CD4-positive, alpha-beta memory T cell (primary cell): ENCODE measurements at regions of chr1 and their contacts with region 1.

Region 1: GRCh38 chr1:84753516-84754385 is 63.5 kb upstream of the SSX2IP start:
- DNase-seq: peak; percentile 61 to 70 (median 65)
- H3K4me3 ChIP-seq: no peak overlapping the region
- H3K4me3 Mint-ChIP-seq: peak overlapping the region in 2 of 8 donors; percentile 0 to 17
- H3K27ac ChIP-seq: no peak overlapping the region
- H3K27ac Mint-ChIP-seq: peak overlapping the region in 1 of 7 donors; percentile 77
- H3K4me1 ChIP-seq: no peaks in the 10 kb centered on the region
- H3K4me1 Mint-ChIP-seq: peaks cover 0 to 8% (median 4%) of the 10 kb centered on the region in 4 donors
- H3K27me3 ChIP-seq: no peaks in the 10 kb centered on the region
- H3K27me3 Mint-ChIP-seq: peaks cover 12 to 26% of the 10 kb centered on the region in 2 donors

Region 2: DNA sequence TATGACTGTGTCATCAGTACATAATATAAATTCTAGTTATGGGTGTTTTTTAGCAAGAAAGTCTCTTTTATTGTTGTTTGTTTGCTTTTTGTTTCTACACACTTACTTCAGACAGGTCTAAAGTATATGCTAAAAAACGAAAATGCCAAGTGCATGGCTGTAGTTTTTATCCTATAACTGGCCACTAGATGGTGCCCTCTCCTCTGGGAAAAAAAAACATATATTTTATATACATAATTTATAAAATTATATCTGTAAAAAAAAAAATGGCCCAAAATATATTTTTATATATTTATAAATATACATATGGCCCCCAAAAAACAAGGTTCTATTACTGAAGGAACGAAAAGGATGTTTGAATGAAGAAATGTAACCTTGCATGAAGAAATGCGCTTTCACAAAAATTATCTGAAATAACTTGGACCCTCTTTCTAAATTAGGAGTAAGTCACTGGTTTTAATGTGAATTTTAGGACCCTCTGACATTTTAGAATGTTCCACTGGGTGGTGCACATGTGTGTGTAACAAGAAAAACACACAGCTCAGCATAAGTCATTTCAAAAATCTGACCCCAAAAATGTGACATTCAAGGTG is 848.3 kb before region 1 on chr1:
- CTCF ChIA-PET with region 1: interaction called, 6 read pairs
- POLR2A ChIA-PET with region 1: no interaction called
- intact Hi-C with region 1: loop called (anchors 1 kb)
- DNase-seq: peak in 4 of 5 donors; percentile 8 to 28 (median 16)
- H3K4me3 ChIP-seq: no peak overlapping the region
- H3K4me3 Mint-ChIP-seq: no peak overlapping the region
- H3K27ac ChIP-seq: no peak overlapping the region
- H3K27ac Mint-ChIP-seq: no peak overlapping the region
- H3K4me1 ChIP-seq: no peaks in the 10 kb centered on the region
- H3K4me1 Mint-ChIP-seq: no peaks in the 10 kb centered on the region
- H3K27me3 ChIP-seq: no peaks in the 10 kb centered on the region
- H3K27me3 Mint-ChIP-seq: peaks cover 12 to 14% of the 10 kb centered on the region in 2 donors

Region 3: GRCh38 chr1:84433258-84434080 is 320.3 kb before region 1 on chr1:
- CTCF ChIA-PET with region 1: interaction called, 19 read pairs
- POLR2A ChIA-PET with region 1: no interaction called
- intact Hi-C with region 1: no loop called
- DNase-seq: peak; percentile 67 to 83 (median 81)
- H3K4me3 ChIP-seq: peak overlapping the region in 1 of 2 donors; percentile 20
- H3K4me3 Mint-ChIP-seq: peak overlapping the region; percentile 65 to 82 (median 76)
- H3K27ac ChIP-seq: peak overlapping the region; percentile 54
- H3K27ac Mint-ChIP-seq: peak overlapping the region in 1 of 7 donors; percentile 88
- H3K4me1 ChIP-seq: peaks cover 36% of the 10 kb centered on the region
- H3K4me1 Mint-ChIP-seq: peaks cover 8 to 15% (median 12%) of the 10 kb centered on the region in 4 donors
- H3K27me3 ChIP-seq: no peaks in the 10 kb centered on the region
- H3K27me3 Mint-ChIP-seq: no peaks in the 10 kb centered on the region

Region 4: DNA sequence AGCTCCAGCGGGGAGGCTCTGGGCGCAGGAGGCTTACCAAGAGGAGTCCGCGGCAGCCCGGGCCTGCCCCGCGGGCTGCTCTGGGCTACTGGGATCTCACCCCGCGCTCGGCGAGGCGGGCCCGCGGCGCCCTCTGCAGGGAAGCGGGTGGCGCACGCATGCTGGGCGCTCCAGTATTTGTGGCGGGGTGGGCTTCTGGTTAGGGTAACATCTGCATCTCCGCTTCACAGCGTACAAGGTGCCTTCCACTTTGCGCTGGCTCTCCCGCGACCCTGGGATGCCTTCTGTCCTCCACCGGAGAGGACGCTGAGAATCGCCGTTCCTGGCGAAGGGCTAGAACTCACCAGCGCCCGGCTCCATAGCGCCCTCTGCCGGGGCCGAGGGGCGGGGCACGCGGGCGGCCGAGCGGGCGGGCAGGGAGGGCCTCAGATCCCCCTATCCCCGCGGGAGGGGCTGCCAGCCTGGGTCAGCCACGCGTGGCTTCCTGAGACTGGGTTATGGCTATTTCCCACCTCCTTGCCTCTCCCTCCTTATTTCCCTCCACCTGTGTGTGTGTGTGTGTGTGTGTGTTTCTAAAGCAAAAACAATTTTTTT is 132.9 kb before region 1 on chr1:
- CTCF ChIA-PET with region 1: interaction called, 8 read pairs
- POLR2A ChIA-PET with region 1: no interaction called
- intact Hi-C with region 1: loop called (anchors 1 kb)
- DNase-seq: peak; percentile 72 to 90 (median 82)
- H3K4me3 ChIP-seq: peak overlapping the region; percentile 47 to 69
- H3K4me3 Mint-ChIP-seq: peak overlapping the region; percentile 89 to 96 (median 93)
- H3K27ac ChIP-seq: no peak overlapping the region
- H3K27ac Mint-ChIP-seq: peak overlapping the region in 6 of 7 donors; percentile 9 to 94 (median 84)
- H3K4me1 ChIP-seq: peaks cover 5% of the 10 kb centered on the region
- H3K4me1 Mint-ChIP-seq: peaks cover 3 to 19% (median 5%) of the 10 kb centered on the region in 4 donors
- H3K27me3 ChIP-seq: no peaks in the 10 kb centered on the region
- H3K27me3 Mint-ChIP-seq: peaks cover 0 to 6% of the 10 kb centered on the region in 2 donors

Region 5: DNA sequence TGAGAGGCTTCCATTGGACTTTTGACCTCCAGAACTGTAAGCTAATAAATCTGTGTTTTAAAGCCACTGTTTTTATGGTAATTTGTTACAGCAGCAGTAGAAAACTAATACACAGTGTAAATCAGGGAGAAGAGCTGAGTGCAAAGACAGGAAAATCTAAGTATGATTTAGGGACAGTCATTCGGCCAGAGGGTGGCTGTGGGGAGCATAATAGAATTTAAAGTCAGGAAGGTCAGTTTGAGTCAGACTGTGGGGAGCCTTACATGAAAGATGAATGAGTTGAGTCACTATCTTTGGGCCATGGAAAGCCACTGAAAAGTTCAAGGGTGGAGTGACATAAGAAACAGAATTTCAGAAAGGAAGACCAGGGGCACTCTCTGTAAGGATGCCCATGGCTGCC is 11.1 kb before region 1 on chr1:
- CTCF ChIA-PET with region 1: interaction called, 35 read pairs
- POLR2A ChIA-PET with region 1: no interaction called
- intact Hi-C with region 1: no loop called
- DNase-seq: no peak
- H3K4me3 ChIP-seq: no peak overlapping the region
- H3K4me3 Mint-ChIP-seq: no peak overlapping the region
- H3K27ac ChIP-seq: no peak overlapping the region
- H3K27ac Mint-ChIP-seq: no peak overlapping the region
- H3K4me1 ChIP-seq: no peaks in the 10 kb centered on the region
- H3K4me1 Mint-ChIP-seq: peaks cover 0 to 2% (median 0%) of the 10 kb centered on the region in 4 donors
- H3K27me3 ChIP-seq: no peaks in the 10 kb centered on the region
- H3K27me3 Mint-ChIP-seq: peaks cover 0 to 2% of the 10 kb centered on the region in 2 donors

Region 6: DNA sequence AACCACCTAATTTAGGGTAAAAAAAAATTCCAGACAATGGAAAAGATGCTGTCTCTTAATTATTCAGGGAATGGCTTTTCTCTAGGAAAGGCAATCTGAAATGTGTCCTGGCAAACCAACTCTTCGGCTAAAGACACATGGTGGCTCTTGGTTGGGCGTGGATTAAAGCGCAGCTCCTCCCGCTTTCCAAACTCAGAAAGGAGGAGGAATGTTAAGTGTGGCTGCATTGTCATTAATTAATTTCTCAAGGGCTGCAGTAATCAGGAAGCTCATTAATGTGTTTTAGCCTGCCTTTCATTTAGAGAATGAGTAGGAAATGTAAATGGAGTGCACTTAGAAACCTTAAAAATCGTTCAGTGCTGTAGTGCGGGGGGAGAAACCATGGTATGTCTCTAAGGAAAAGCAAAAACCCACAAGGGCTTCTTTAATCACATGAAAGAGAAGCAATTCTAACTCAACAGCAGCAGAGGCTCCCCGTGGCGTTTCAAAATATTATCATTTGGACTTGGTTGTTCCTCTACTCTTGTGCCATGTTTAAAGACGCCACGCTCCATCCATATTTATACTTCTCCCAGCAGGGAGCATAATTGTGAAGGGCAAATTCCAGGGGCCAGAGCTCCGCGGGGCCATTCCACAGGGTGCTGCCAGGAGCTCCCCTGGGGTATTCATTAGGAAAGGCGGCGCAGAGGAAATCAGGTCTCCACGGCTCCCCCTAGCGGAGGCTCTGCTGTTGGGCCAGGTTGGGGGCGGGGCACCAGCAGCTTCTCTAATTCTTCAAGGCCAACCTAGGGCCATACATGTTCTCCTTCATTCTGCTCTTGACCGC is 28.4 kb after region 1 on chr1:
- CTCF ChIA-PET with region 1: interaction called, 12 read pairs
- POLR2A ChIA-PET with region 1: no interaction called
- intact Hi-C with region 1: no loop called
- DNase-seq: peak; percentile 71 to 78 (median 75)
- H3K4me3 ChIP-seq: peak overlapping the region in 1 of 2 donors; percentile 28
- H3K4me3 Mint-ChIP-seq: peak overlapping the region; percentile 77 to 93 (median 87)
- H3K27ac ChIP-seq: no peak overlapping the region
- H3K27ac Mint-ChIP-seq: peak overlapping the region in 5 of 7 donors; percentile 7 to 82 (median 28)
- H3K4me1 ChIP-seq: peaks cover 9% of the 10 kb centered on the region
- H3K4me1 Mint-ChIP-seq: peaks cover 8 to 32% (median 22%) of the 10 kb centered on the region in 4 donors
- H3K27me3 ChIP-seq: no peaks in the 10 kb centered on the region
- H3K27me3 Mint-ChIP-seq: peaks cover 0 to 2% of the 10 kb centered on the region in 2 donors

Region 7: DNA sequence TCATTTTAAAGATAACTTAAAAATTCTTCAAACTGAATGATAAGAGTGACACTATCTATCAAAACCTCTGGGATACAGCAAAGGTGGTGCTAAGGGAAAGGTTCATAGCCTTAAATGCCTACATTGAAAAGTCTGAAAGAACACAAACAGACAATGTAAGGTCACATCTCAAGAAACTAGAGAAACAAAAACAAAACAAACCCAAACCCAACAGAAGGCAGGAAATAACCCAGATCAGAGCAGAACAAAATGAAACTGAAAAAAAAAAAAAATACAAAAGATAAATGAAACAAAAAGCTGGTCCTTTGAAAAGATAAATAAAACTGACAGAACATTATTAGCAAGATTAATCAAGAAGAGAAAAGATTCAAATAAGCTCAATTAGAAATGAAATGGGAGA is 1635.6 kb after region 1 on chr1:
- CTCF ChIA-PET with region 1: no interaction called
- POLR2A ChIA-PET with region 1: no interaction called
- intact Hi-C with region 1: no loop called
- DNase-seq: peak in 4 of 5 donors; percentile 51 to 66 (median 55)
- H3K4me3 ChIP-seq: peak overlapping the region; percentile 9 to 12
- H3K4me3 Mint-ChIP-seq: peak overlapping the region; percentile 59 to 88 (median 83)
- H3K27ac ChIP-seq: peak overlapping the region; percentile 39
- H3K27ac Mint-ChIP-seq: peak overlapping the region; percentile 82 to 98 (median 93)
- H3K4me1 ChIP-seq: peaks cover 67% of the 10 kb centered on the region
- H3K4me1 Mint-ChIP-seq: peaks cover 45 to 68% (median 50%) of the 10 kb centered on the region in 4 donors
- H3K27me3 ChIP-seq: no peaks in the 10 kb centered on the region
- H3K27me3 Mint-ChIP-seq: no peaks in the 10 kb centered on the region